K562 (cell line): ENCODE measurements at regions of chr5 and their contacts with region 1.

Region 1: GRCh38 chr5:172479044-172479783 is 24.9 kb upstream of the SH3PXD2B start:
- DNase-seq: peak; percentile 82 to 86 (median 83)
- ATAC-seq: peak; percentile 100
- H3K4me3 ChIP-seq: no peak overlapping the region
- H3K27ac ChIP-seq: no peak overlapping the region
- H3K4me1 ChIP-seq: no peaks in the 10 kb centered on the region
- H3K27me3 ChIP-seq: peaks cover 2 to 9% of the 10 kb centered on the region in 2 experiments; a peak in 3 of 5 replicates
- CTCF ChIP-seq: peak; percentile 88 to 98 (median 98)
- EP300 ChIP-seq: no peak
- POLR2A ChIP-seq: no peak
- RAD21 ChIP-seq: peak; percentile 92 to 98

Region 2: GRCh38 chr5:172403189-172403796 is 75.9 kb before region 1 on chr5:
- CTCF ChIA-PET with region 1: no interaction called
- POLR2A ChIA-PET with region 1: no interaction called
- in situ Hi-C with region 1: no loop called
- intact Hi-C with region 1: no loop called
- DNase-seq: no peak
- ATAC-seq: no peak
- H3K4me3 ChIP-seq: no peak overlapping the region
- H3K27ac ChIP-seq: no peak overlapping the region
- H3K4me1 ChIP-seq: peaks cover 0 to 3% of the 10 kb centered on the region in 2 experiments; a peak in 2 of 5 replicates
- H3K27me3 ChIP-seq: peaks cover 9 to 21% of the 10 kb centered on the region in 2 experiments; a peak in 4 of 5 replicates
- CTCF ChIP-seq: no peak
- EP300 ChIP-seq: no peak
- POLR2A ChIP-seq: no peak
- RAD21 ChIP-seq: no peak

Region 3: DNA sequence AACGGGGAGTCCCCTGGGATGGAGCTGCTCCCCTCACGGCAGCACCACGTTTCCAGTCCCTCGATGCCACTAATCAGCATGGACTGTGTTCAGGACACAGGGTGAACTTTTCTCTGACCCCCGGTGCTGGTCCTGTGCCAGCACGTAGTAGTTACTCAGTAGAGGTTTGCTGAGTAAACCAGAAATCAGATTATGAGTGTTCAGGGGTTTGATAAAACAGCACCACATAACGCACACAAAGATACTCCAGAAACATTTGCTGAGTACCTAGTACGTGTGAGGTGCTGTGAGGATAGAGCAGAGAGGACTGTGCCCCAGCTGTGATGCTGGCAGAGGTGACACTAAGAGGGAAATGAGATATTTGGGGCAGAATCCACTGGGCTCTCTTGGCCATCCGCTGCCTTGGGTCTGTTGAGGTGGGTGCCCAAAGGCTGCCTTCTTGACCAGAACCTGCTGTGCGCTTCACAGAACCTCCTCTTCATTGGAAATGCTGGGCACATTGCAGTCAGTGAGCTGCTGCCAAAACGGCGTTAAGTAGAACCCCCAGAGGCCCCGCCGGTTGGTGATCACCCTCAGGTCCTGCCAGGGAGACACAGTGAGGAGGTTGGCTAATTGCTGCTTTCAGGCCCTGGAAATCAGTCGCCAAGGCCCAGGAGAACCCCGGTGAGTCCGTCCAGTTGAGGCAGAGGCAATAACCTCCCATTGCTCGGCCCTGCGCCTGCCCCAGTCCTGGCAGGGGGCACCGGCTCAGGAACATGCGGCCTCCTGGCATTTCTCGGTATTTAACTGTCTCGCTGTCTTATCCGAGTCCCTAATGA is 211.3 kb after region 1 on chr5:
- CTCF ChIA-PET with region 1: no interaction called
- POLR2A ChIA-PET with region 1: interaction called, 3 read pairs
- in situ Hi-C with region 1: loop called (anchors 5 kb)
- intact Hi-C with region 1: no loop called
- DNase-seq: no peak
- ATAC-seq: no peak
- H3K4me3 ChIP-seq: no peak overlapping the region
- H3K27ac ChIP-seq: no peak overlapping the region
- H3K4me1 ChIP-seq: peaks cover 0 to 10% of the 10 kb centered on the region in 2 experiments; a peak in 1 of 5 replicates
- H3K27me3 ChIP-seq: peaks cover 39 to 75% of the 10 kb centered on the region in 2 experiments; a peak in 4 of 5 replicates
- CTCF ChIP-seq: no peak
- EP300 ChIP-seq: no peak
- POLR2A ChIP-seq: no peak
- RAD21 ChIP-seq: no peak

Region 4: GRCh38 chr5:172932313-172933017 is 453.3 kb after region 1 on chr5:
- CTCF ChIA-PET with region 1: no interaction called
- POLR2A ChIA-PET with region 1: no interaction called
- in situ Hi-C with region 1: no loop called
- intact Hi-C with region 1: loop called (anchors 10 kb)
- DNase-seq: peak; percentile 75 to 83 (median 80)
- ATAC-seq: peak; percentile 98
- H3K4me3 ChIP-seq: no peak overlapping the region
- H3K27ac ChIP-seq: no peak overlapping the region
- H3K4me1 ChIP-seq: peaks cover 0 to 5% of the 10 kb centered on the region in 2 experiments; a peak in 1 of 5 replicates
- H3K27me3 ChIP-seq: no peaks in the 10 kb centered on the region
- CTCF ChIP-seq: peak; percentile 91 to 94 (median 92)
- EP300 ChIP-seq: 0 out of 2 replicates have a peak, but pooled peaks have one; percentile 4
- POLR2A ChIP-seq: no peak
- RAD21 ChIP-seq: peak; percentile 89 to 97

Region 5: DNA sequence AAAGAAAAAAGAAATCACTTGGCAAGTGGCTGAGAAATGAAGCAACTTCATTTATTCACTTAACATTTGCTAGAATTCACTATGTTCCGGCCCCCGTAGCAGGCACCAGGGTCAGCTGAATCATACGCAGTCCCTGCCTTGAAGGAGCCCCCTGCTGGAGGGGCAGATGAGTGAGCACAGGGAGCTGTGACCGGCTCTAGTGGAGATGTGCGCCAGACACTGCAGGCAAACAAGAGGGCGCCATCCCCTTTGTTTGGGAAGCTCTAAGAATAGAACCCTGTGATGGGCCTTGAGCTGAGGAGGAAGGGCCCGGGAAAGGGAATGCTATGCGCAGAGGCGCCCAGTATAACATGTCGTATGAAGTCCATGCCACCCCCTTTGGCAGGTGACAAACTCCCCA is 459.9 kb after region 1 on chr5:
- CTCF ChIA-PET with region 1: no interaction called
- POLR2A ChIA-PET with region 1: no interaction called
- in situ Hi-C with region 1: loop called (anchors 10 kb)
- intact Hi-C with region 1: loop called (anchors 10 kb)
- DNase-seq: peak; percentile 43 to 67 (median 62)
- ATAC-seq: peak; percentile 91
- H3K4me3 ChIP-seq: no peak overlapping the region
- H3K27ac ChIP-seq: no peak overlapping the region
- H3K4me1 ChIP-seq: peaks cover 7 to 12% of the 10 kb centered on the region in 2 experiments; a peak in 4 of 5 replicates
- H3K27me3 ChIP-seq: no peaks in the 10 kb centered on the region
- CTCF ChIP-seq: peak; percentile 82 to 95 (median 86)
- EP300 ChIP-seq: no peak
- POLR2A ChIP-seq: no peak
- RAD21 ChIP-seq: peak in 1 of 2 experiments; percentile 68; a peak in 2 of 4 replicates

Region 6: DNA sequence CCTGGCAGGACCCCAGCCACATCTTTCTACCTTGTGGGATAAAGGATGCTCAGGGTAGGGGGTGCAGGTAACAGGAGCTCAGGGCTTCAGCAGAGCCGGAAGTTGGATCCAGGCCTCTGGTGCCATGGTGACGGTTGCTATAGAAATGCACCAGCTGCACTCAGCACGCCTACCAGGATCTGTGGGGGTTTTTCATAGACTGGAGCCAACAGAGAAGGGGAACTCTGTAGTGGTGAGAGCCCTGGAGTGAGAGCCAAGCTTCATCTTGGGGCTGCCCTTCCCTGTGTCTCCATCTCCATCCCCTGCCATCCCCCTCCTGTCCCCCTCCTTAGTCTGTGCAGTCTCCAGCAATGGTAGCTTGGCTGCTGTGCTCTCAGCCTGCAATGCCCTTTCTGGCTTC is 1164.7 kb after region 1 on chr5:
- CTCF ChIA-PET with region 1: no interaction called
- POLR2A ChIA-PET with region 1: no interaction called
- in situ Hi-C with region 1: no loop called
- intact Hi-C with region 1: no loop called
- DNase-seq: no peak
- ATAC-seq: peak; percentile 13
- H3K4me3 ChIP-seq: no peak overlapping the region
- H3K27ac ChIP-seq: no peak overlapping the region
- H3K4me1 ChIP-seq: peaks cover 0 to 11% of the 10 kb centered on the region in 2 experiments; a peak in 4 of 5 replicates
- H3K27me3 ChIP-seq: peaks cover 0 to 37% of the 10 kb centered on the region in 2 experiments; a peak in 2 of 5 replicates
- CTCF ChIP-seq: no peak
- EP300 ChIP-seq: no peak
- POLR2A ChIP-seq: no peak
- RAD21 ChIP-seq: no peak